ENCODE measurements at regions of chr2 and their contacts with region 1.

Region 1: GRCh38 chr2:37005118-37005868 is 39.0 kb upstream of the STRN start:
- DNase-seq: no peak
- ATAC-seq: peak; percentile 77 to 78
- H3K4me3 ChIP-seq: no peak overlapping the region
- H3K27ac ChIP-seq: peak overlapping the region; percentile 45
- H3K4me1 ChIP-seq: no peaks in the 10 kb centered on the region
- H3K27me3 ChIP-seq: no peaks in the 10 kb centered on the region

Region 2: DNA sequence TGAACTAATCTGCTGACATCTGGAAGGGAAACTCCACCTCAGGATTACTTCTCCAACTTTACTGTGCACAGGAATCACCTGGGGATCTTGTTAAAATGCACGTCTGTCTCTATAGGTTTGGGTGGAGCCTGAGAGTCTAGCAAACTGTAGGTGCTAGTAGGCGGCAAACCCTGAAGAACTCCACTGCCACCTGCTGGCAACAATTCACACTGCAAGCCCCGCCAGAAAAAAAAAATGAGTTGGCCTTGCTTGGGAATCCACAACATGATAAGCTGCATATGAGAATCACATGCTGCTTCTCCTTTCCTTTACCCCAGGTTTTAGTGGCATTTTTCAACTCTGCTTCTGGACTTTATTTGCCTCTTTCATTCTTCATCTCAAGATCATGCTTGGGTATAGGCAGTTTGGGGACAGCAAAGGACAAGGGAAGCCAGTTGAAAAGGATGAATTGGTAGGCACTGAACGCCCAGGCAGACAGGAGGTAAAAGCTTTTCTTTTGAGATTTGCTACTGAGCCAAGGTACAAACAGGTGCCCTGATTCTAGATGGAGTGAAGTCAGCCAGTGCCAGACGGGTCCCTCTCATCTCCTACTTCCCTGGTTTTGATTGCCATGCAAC is 220.0 kb before region 1 on chr2:
- intact Hi-C with region 1: loop called in 3 of 4 experiments (anchors 10 kb)
- DNase-seq: peak in 2 of 3 donors; percentile 67 to 71
- ATAC-seq: peak; percentile 40 to 45
- H3K4me3 ChIP-seq: no peak overlapping the region
- H3K27ac ChIP-seq: no peak overlapping the region
- H3K4me1 ChIP-seq: peaks cover 2% of the 10 kb centered on the region
- H3K27me3 ChIP-seq: no peaks in the 10 kb centered on the region

Measured in right cardiac atrium (tissue), 5 donors.